Calu3 (cell line): ENCODE measurements at regions of chr16 and their contacts with region 1.

Region 1: GRCh38 chr16:84617791-84618580 is at the start of gene COTL1:
- DNase-seq: peak; percentile 99
- H3K4me3 Mint-ChIP-seq: peak within 1 kb of the TSS; percentile 98
- H3K27ac Mint-ChIP-seq: peak within 1 kb of the TSS; percentile 98
- H3K4me1 Mint-ChIP-seq: peaks cover 59% of the 10 kb centered on the region
- H3K27me3 Mint-ChIP-seq: no peaks in the 10 kb centered on the region
- CTCF ChIP-seq: no peak
- total RNA-seq, gene COTL1: 312 and 343 TPM in 2 replicates

Region 2: GRCh38 chr16:84485255-84486010 is 132.6 kb before region 1 on chr16:
- CTCF ChIA-PET with region 1: no interaction called
- intact Hi-C with region 1: no loop called
- DNase-seq: no peak
- H3K4me3 Mint-ChIP-seq: no peak overlapping the region
- H3K27ac Mint-ChIP-seq: no peak overlapping the region
- H3K4me1 Mint-ChIP-seq: no peaks in the 10 kb centered on the region
- H3K27me3 Mint-ChIP-seq: no peaks in the 10 kb centered on the region
- CTCF ChIP-seq: no peak

Region 3: GRCh38 chr16:84504420-84505248 is 113.4 kb before region 1 on chr16 and contains the start of gene MEAK7:
- CTCF ChIA-PET with region 1: interaction called, 12 read pairs
- intact Hi-C with region 1: no loop called
- DNase-seq: peak; percentile 100
- H3K4me3 Mint-ChIP-seq: peak within 1 kb of the TSS; percentile 91
- H3K27ac Mint-ChIP-seq: peak within 1 kb of the TSS; percentile 70
- H3K4me1 Mint-ChIP-seq: peaks cover 62% of the 10 kb centered on the region
- H3K27me3 Mint-ChIP-seq: no peaks in the 10 kb centered on the region
- CTCF ChIP-seq: no peak
- total RNA-seq, gene MEAK7: 27.6 and 29.5 TPM in 2 replicates

Region 4: GRCh38 chr16:84569382-84569987 is 48.5 kb before region 1 on chr16:
- CTCF ChIA-PET with region 1: interaction called, 15 read pairs
- intact Hi-C with region 1: loop called (anchors 1 kb)
- DNase-seq: peak; percentile 69
- H3K4me3 Mint-ChIP-seq: peak overlapping the region; percentile 52
- H3K27ac Mint-ChIP-seq: peak overlapping the region; percentile 90
- H3K4me1 Mint-ChIP-seq: peaks cover 58% of the 10 kb centered on the region
- H3K27me3 Mint-ChIP-seq: no peaks in the 10 kb centered on the region
- CTCF ChIP-seq: no peak

Region 5: DNA sequence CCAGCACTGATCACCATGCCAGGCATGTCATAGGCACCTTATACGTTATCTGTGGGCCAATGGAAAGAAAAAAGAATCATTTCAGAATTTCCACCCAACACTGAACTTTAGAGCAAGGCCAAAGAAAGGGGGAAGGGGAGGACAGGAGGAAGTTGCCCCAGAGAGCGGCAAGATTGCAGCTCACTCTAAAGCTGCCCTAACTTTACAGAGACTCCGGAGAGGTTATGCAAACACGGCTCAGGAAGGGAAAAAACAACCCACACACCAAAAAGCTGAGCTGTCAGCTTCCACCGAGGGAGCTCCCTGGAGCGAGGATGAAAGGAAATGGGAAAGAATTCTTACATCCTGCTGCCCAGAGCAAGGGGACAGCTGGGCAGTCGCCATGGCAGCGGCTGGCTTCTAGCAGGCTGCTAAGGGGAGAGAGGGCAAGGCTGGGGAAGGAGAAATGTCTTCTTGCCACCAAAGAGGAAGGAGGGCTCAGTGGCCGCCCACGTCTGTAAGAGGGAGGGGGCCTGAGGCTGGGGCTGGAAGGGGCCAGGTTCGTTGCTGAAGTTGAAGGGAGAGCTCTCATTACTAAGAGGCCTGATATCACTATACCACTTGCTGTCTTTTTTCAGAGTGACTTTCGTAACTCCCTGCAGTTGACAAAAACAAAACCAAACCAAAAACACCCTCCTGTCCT is 18.3 kb before region 1 on chr16:
- CTCF ChIA-PET with region 1: interaction called, 5 read pairs
- intact Hi-C with region 1: loop called (anchors 2 kb)
- DNase-seq: no peak
- H3K4me3 Mint-ChIP-seq: peak overlapping the region; percentile 20
- H3K27ac Mint-ChIP-seq: peak overlapping the region; percentile 45
- H3K4me1 Mint-ChIP-seq: peaks cover 62% of the 10 kb centered on the region
- H3K27me3 Mint-ChIP-seq: no peaks in the 10 kb centered on the region
- CTCF ChIP-seq: no peak

Region 6: DNA sequence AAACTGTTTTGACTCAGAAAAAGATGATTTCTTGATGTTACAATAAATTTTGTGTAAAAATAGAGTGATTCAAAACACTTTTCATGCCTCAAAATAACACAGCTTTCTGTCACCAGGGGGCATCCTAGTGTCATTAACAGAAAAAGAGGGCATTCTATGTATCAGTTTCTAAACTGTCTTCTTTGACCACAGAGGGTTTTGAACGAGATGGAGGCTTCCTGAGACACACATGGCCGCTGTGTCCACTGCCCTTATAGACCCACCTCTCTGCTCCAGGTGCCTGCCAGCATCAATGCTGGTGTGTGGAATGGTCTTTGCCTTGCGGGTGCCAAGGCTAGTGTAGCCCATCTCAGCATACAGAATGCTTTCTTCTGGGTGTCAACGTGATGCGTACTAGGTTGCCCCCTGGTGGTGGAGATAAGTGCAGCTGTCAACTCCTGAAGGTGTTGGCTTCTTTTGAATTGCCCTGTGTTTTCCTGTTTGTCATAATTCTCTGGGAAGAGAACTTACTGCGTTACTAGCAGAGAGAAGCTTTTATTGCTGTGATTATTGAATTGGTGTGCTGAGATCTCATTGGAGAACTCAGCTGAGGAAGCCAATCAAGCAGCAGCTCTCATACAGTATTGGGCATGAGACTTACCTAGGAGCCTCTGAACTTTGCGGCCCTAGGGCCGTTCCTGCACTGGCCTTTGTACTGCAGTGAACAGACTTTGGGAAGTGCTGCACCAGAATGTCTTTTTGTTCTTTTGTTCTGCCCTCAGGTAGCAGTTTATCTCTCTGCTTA is 120.5 kb after region 1 on chr16:
- CTCF ChIA-PET with region 1: interaction called, 5 read pairs
- intact Hi-C with region 1: loop called (anchors 2 kb)
- DNase-seq: peak; percentile 87
- H3K4me3 Mint-ChIP-seq: no peak overlapping the region
- H3K27ac Mint-ChIP-seq: no peak overlapping the region
- H3K4me1 Mint-ChIP-seq: peaks cover 79% of the 10 kb centered on the region
- H3K27me3 Mint-ChIP-seq: no peaks in the 10 kb centered on the region
- CTCF ChIP-seq: peak; percentile 94